KBM-7 (cell line): ENCODE measurements at regions of chr6 and their contacts with region 1.

Region 1: GRCh38 chr6:159184559-159184958 is 15.4 kb downstream of the FNDC1 start:
- DNase-seq: no peak

Region 2: GRCh38 chr6:158970640-158971275 is 213.8 kb before region 1 on chr6:
- in situ Hi-C with region 1: no loop called
- DNase-seq: no peak

Region 3: GRCh38 chr6:159106627-159107241 is 77.8 kb before region 1 on chr6:
- in situ Hi-C with region 1: no loop called
- DNase-seq: peak; percentile 92

Region 4: DNA sequence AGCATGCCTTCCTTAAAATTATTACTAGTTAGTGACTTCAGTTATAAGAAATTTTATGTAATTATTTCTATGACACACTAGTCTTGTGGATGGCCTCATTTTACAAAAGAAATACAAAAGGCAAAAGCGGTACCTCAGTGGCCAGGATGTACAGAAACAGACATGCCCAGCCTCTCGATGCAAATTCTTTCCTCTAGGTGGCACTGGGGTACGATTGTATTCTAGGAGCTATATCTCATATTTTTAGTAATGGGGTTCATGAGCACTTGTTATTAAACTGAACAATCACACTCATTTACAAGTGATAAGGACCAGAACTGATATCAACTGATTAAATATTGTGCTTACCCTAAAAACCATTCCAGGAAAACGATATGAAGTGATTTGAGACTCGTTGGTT is 448.6 kb after region 1 on chr6:
- in situ Hi-C with region 1: loop called (anchors 25 kb)
- DNase-seq: peak; percentile 27